ENCODE measurements at regions of chr18 and their contacts with region 1.

Region 1: DNA sequence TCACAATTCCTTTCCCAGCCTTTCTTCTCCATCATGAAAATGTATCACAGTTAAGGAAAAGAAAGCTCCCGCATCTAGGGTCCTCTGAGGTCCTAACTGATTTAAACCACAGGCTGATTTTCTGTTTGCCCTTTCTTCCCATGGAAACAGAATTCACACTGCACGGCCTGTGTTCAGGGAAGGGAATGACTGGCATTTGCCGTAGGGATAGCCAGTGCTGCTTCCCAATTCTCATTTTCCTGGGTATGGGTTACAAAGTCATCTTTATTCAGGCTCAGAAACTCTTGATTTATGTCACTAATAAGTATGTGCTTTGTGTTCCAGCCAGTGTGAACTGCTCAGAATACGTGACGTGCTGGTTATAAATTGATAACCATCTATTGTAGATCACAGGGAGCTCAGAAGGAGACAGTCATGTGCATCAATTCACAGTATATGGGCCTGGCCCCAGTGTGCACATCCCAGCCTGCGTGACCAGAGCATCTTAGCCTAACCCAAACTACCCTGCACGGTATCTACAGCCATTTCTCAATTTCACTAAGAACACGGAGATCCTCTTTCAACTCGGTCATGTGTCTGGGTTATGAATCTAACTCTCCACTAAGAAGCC is 163.3 kb downstream of the LRRC30 start:
- DNase-seq: no peak
- H3K4me3 ChIP-seq: no peak overlapping the region
- CTCF ChIP-seq: no peak

Region 2: GRCh38 chr18:7329016-7329415 is 65.1 kb before region 1 on chr18:
- in situ Hi-C with region 1: loop called (anchors 10 kb)
- DNase-seq: no peak
- H3K4me3 ChIP-seq: no peak overlapping the region
- CTCF ChIP-seq: no peak